Ovary (tissue), 10 donors: ENCODE measurements at regions of chr11 and their contacts with region 1.

Region 1: GRCh38 chr11:30346068-30346688 is 23.3 kb downstream of the ARL14EP start:
- DNase-seq: no peak
- H3K4me3 ChIP-seq: no peak overlapping the region
- H3K27ac ChIP-seq: no peak overlapping the region
- H3K4me1 ChIP-seq: no peaks in the 10 kb centered on the region
- H3K27me3 ChIP-seq: no peaks in the 10 kb centered on the region
- CTCF ChIP-seq: no peak
- EP300 ChIP-seq: no peak
- POLR2A ChIP-seq: no peak

Region 2: DNA sequence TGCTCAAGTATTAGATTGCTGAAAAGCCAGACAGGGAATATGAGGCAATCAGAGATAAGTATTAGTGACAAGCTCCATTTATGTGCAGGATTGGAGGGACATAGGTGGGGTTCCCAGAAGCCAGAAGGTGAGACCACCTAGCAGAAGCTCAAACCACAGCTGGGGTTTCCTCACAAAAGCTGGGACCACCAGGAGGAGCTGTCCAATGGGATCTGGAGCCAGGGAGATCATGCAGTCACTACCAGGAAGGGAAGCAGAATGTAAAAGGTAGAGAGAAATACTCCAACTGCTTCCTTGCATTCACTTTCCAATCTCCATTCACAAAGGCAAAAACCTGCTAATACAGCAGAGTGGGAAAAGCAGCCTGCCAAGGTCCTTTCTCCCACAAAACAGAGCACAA is 120.5 kb before region 1 on chr11:
- intact Hi-C with region 1: no loop called
- DNase-seq: no peak
- H3K4me3 ChIP-seq: no peak overlapping the region
- H3K27ac ChIP-seq: no peak overlapping the region
- H3K4me1 ChIP-seq: no peaks in the 10 kb centered on the region
- H3K27me3 ChIP-seq: no peaks in the 10 kb centered on the region
- CTCF ChIP-seq: no peak
- EP300 ChIP-seq: no peak
- POLR2A ChIP-seq: no peak

Region 3: DNA sequence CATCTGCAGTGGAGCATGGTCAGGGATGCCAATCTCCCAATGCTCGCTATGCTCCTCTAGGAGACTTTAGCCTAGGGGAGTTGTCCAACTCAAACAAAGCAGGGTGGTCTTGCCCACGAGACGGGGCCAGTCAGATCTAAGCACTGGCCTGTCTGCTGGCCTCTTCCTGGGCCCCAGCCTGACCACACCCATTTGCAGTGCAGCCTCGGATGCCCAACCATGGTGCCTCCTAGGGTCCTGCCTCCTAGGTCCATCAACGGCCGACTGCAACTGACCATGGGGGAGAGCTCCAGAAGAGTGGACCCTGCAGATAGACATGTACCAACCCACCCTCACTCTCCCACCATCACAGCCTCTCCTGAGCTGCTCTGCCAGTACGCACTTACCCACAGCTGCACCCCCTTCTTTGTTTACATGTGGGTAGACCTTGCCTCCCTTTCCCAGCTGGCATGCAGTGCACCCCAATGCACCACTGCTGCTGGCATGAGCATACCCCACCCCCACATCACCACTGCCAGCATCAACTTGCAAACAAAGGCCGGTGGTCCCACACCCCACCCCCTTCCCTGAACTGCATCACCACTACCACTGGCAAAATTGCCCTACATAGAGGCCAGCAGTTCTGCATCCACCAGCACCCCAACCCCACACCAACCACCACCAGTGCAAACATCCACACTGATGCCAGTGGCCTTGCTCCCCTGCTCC is 50.8 kb before region 1 on chr11:
- intact Hi-C with region 1: no loop called
- DNase-seq: no peak
- H3K4me3 ChIP-seq: no peak overlapping the region
- H3K27ac ChIP-seq: no peak overlapping the region
- H3K4me1 ChIP-seq: no peaks in the 10 kb centered on the region
- H3K27me3 ChIP-seq: no peaks in the 10 kb centered on the region
- CTCF ChIP-seq: no peak
- EP300 ChIP-seq: no peak
- POLR2A ChIP-seq: no peak

Region 4: DNA sequence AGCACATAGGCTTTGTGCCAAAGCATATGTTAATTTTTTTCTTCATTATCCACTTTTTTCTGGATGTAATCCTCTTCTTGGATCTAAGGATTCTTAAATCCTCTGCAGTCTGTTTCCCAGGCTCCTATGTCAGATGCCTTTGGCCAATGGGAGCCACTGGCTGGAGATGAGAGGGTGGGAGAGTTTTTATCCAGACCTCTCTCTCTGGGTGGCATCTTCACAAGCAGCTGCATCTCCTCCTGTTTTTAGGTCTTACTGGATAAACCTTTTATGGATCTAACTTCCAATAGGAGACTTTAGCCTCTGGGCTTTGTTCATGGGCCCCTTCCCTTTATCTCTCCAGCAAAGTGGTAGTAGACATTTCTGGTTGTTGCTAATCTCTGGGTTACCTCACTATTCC is 262.4 kb after region 1 on chr11:
- intact Hi-C with region 1: no loop called
- DNase-seq: no peak
- H3K4me3 ChIP-seq: no peak overlapping the region
- H3K27ac ChIP-seq: no peak overlapping the region
- H3K4me1 ChIP-seq: no peaks in the 10 kb centered on the region
- H3K27me3 ChIP-seq: no peaks in the 10 kb centered on the region
- CTCF ChIP-seq: no peak
- EP300 ChIP-seq: no peak
- POLR2A ChIP-seq: no peak

Region 5: DNA sequence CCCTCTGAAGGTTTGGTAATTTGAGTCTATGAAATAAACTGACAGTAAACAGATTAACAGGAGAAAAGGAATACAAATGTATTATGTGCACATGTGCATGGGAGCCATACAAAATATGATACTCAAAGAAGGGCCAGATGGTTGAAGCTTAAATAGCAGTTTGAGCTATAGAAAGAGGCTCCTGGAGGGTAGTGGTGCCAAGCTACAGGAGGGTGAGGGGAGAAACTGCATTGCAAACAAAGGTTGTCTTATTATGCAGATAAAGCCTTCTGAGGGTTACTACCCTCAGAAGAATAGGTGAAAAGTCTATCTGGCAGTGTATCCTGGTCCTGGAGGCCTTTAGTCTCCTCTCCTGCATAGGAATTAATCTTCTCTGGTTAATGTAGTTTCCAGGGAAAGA is 507.3 kb after region 1 on chr11:
- intact Hi-C with region 1: loop called in 1 of 4 experiments (anchors 5 kb)
- DNase-seq: no peak
- H3K4me3 ChIP-seq: no peak overlapping the region
- H3K27ac ChIP-seq: no peak overlapping the region
- H3K4me1 ChIP-seq: no peaks in the 10 kb centered on the region
- H3K27me3 ChIP-seq: no peaks in the 10 kb centered on the region
- CTCF ChIP-seq: no peak
- EP300 ChIP-seq: no peak
- POLR2A ChIP-seq: no peak